ENCODE measurements at regions of chr20 and their contacts with region 1.

Region 1: DNA sequence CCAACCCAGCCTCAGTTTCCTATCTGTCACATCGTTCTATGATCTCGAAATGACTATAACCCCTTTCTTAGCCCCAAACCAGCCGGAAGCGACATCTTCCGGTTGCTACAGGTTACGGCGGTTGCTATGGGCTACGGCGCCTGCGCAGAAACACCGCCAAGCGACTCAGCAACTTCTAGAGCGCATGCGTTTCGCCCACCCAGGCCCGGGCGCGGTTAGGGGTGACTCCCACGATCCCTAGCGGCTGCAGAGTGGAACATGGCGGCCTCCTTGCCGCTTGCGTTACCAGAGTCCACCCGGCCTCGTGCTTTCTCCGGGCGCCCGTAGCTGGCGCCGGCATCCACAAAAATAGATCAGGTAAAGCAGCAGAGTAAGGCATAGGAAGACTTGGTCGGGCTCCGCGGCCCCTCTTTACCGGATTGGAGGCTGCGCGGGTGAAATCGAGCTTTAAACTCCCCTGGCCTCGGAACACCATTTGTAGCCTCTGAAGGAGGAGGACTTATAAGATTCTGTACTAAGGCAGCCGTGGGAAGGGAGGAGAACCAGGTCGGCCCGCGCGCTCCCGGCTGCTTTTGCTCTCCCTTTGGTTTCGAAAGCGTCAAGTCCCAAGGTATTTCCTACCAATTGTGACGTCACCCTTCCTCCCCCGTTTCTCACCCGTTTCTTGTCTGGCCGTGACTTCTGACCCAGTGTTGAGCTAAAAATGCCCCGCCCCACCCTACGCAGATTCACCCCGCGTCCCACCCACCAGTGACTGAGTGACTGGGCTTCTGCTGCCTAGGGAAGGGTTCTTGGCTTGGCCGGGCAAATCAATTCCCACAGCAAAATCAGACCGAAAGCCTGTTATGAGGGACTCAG is 3.5 kb downstream of the SDCBP2 start:
- DNase-seq: peak; percentile 92 to 98 (median 96)

Region 2: DNA sequence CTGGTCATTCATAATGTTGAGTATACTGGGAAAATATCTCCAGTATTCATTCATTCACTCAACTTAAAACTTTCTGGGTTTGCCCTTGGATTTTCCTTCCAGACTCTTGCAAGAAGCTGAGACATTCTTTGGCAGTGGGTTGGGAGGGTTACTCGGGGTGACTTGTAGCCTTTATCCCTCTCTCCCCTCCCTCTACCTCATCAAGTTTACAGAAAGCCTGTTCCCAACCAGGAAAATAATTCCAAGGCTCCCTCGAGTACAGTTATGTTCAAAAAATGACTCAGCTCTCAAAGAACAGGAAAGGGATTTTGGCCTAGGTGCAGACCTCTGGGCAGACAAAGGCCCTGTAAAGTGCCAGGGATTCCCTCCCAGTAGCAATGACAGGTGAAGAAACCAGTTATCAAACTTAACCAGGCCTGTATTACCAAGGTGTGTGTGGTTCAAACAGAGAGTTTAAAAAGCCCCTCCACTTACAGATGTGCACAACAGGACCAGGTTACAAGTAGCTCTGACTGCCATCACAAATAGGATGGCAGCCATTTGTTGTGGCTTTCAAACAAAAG is 45.2 kb after region 1 on chr20:
- intact Hi-C with region 1: loop called (anchors 5 kb)
- DNase-seq: no peak

Region 3: GRCh38 chr20:1392823-1393506 is 67.6 kb after region 1 on chr20 and contains the start of gene FKBP1A:
- intact Hi-C with region 1: loop called (anchors 5 kb)
- DNase-seq: peak; percentile 67 to 95 (median 89)